ENCODE measurements at regions of chr6 and their contacts with region 1.

Region 1: DNA sequence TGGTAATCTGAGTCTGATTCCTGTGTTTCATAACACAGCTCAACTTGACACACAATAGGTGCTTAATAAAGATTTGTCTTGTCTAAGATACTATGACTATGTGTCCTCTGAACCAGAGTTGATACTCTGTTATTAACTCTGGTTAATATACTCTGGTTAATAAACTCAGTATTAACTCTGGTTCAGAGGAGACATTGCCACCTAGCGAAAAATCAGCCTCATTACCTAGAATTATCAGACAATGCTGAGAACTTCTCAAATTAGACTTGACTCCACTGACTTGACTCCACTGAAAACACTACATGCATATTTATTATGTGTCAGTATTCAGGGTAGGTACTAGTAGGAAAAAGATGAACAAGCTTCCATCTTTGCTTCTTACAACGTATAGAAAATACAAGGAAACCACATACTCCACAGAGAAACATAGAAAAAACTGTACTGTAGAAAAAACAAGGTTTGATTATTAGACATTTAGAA is 73.9 kb downstream of the AHI1 start:
- DNase-seq: peak in 4 of 14 experiments; percentile 3 to 54 (median 48)
- ATAC-seq: peak; percentile 48
- H3K4me3 ChIP-seq: no peak overlapping the region
- H3K4me3 Mint-ChIP-seq: no peak overlapping the region
- H3K27ac ChIP-seq: no peak overlapping the region
- H3K27ac Mint-ChIP-seq: no peak overlapping the region
- H3K4me1 ChIP-seq: no peaks in the 10 kb centered on the region
- H3K4me1 Mint-ChIP-seq: no peaks in the 10 kb centered on the region
- H3K27me3 ChIP-seq: no peaks in the 10 kb centered on the region
- H3K27me3 Mint-ChIP-seq: no peaks in the 10 kb centered on the region
- CTCF ChIP-seq: peak; percentile 74

Region 2: DNA sequence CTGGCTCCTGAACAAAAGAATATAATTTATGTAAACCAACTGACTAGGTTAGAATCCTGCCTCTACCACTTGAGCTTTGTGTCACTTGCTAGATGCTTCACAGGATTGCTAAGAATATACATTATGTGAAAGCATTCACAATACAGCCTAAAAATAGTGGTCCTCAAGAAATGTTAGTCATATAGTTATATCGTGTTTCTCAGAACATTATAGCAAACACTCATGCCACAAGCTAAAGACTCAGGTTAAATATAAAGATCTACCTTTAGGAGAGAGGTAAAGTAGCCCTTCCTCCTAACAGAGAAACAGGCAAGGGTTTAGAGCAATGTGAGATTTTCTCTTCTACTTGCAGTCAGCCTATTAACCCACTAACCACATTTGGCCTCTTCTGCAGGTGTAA is 456.0 kb before region 1 on chr6:
- CTCF ChIA-PET with region 1: no interaction called
- POLR2A ChIA-PET with region 1: no interaction called
- intact Hi-C with region 1: no loop called
- DNase-seq: no peak
- ATAC-seq: no peak
- H3K4me3 ChIP-seq: no peak overlapping the region
- H3K4me3 Mint-ChIP-seq: no peak overlapping the region
- H3K27ac ChIP-seq: no peak overlapping the region
- H3K27ac Mint-ChIP-seq: no peak overlapping the region
- H3K4me1 ChIP-seq: no peaks in the 10 kb centered on the region
- H3K4me1 Mint-ChIP-seq: no peaks in the 10 kb centered on the region
- H3K27me3 ChIP-seq: no peaks in the 10 kb centered on the region
- H3K27me3 Mint-ChIP-seq: no peaks in the 10 kb centered on the region
- CTCF ChIP-seq: no peak

Region 3: DNA sequence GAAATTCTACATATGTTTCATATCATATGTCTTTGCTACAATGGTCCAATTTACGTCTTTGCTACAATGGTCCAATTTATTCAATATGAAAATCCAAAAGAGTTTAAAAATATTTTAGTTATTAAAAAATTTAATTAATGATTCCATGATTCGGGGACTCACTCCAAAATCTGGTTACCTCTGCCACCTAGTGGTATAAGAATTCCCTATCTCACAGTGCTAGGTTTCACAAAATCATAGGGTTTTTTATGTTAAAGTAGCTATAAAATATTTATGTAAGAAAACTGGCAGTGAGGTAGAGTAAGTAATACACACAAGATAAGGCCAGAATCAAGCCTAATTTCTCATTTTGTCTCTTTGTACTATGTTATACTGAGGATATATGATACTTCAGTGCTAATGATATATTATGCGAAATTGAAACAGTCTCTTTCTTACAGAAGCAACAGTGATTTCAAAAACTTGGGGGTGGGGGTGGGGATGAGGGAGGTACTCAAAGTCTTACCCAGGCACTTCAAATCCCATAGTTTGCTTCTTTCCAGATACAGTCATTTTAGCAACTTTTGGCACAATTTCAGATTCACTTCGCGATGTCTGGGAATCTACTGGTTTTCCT is 421.4 kb before region 1 on chr6:
- CTCF ChIA-PET with region 1: no interaction called
- POLR2A ChIA-PET with region 1: no interaction called
- intact Hi-C with region 1: loop called in 1 of 2 experiments (anchors 10 kb)
- DNase-seq: peak in 3 of 14 experiments; percentile 33 to 45 (median 34)
- ATAC-seq: no peak
- H3K4me3 ChIP-seq: no peak overlapping the region
- H3K4me3 Mint-ChIP-seq: no peak overlapping the region
- H3K27ac ChIP-seq: no peak overlapping the region
- H3K27ac Mint-ChIP-seq: no peak overlapping the region
- H3K4me1 ChIP-seq: no peaks in the 10 kb centered on the region
- H3K4me1 Mint-ChIP-seq: peaks cover 17% of the 10 kb centered on the region
- H3K27me3 ChIP-seq: no peaks in the 10 kb centered on the region
- H3K27me3 Mint-ChIP-seq: no peaks in the 10 kb centered on the region
- CTCF ChIP-seq: peak; percentile 69

Region 4: GRCh38 chr6:135393289-135393688 is 30.4 kb before region 1 on chr6:
- CTCF ChIA-PET with region 1: no interaction called
- POLR2A ChIA-PET with region 1: no interaction called
- intact Hi-C with region 1: no loop called
- DNase-seq: no peak
- ATAC-seq: no peak
- H3K4me3 ChIP-seq: no peak overlapping the region
- H3K4me3 Mint-ChIP-seq: no peak overlapping the region
- H3K27ac ChIP-seq: no peak overlapping the region
- H3K27ac Mint-ChIP-seq: no peak overlapping the region
- H3K4me1 ChIP-seq: no peaks in the 10 kb centered on the region
- H3K4me1 Mint-ChIP-seq: no peaks in the 10 kb centered on the region
- H3K27me3 ChIP-seq: no peaks in the 10 kb centered on the region
- H3K27me3 Mint-ChIP-seq: no peaks in the 10 kb centered on the region
- CTCF ChIP-seq: no peak

Measured in CD4-positive, alpha-beta T cell (primary cell).